Uterus (tissue), 4 donors: ENCODE measurements at regions of chr4 and their contacts with region 1.

Region 1: DNA sequence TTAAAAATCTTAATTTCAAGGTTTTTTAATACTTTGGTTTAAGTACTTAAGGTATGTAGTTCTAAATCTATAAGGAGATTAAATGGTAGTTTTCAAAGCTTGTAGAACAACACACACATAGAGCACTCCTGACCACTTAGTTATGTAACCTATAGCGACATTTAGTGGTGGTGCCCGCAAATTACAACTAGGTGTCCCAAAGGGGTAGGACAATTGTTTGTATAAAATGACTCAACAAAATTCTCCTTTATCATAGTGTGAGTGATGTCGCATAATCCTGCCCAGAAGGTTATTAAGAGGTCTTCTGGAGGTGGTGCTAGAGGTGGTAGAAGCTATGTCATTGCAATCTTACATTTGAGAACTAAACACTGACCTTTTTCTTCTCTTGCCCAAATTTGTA is 373.0 kb upstream of the RASGEF1B start:
- DNase-seq: peak; percentile 62 to 72
- H3K4me3 ChIP-seq: no peak overlapping the region
- H3K27ac ChIP-seq: no peak overlapping the region
- H3K4me1 ChIP-seq: peaks cover 0 to 5% of the 10 kb centered on the region in 2 donors
- H3K27me3 ChIP-seq: no peaks in the 10 kb centered on the region
- CTCF ChIP-seq: peak; percentile 65 to 85 (median 76)
- POLR2A ChIP-seq: no peak

Region 2: DNA sequence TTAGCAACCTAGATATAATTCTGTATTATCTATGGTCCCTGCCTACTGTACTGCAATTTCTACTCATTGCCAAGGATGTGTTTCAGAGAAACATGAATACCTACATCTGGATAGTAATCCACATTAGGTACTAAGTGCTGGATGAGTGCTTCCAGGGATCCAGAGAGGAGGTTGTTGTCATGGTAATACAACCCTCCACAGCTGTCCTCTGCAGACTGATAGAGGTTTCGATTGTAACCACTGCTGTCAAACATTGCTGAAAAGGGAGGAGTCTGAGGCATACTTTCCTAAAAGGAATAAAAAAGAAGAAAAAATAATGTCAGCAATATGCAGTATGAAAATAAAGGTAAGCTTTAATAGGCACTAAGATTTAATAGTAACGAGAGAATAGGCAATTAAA is 385.5 kb before region 1 on chr4:
- intact Hi-C with region 1: loop called (anchors 5 kb)
- DNase-seq: no peak
- H3K4me3 ChIP-seq: no peak overlapping the region
- H3K27ac ChIP-seq: no peak overlapping the region
- H3K4me1 ChIP-seq: no peaks in the 10 kb centered on the region
- H3K27me3 ChIP-seq: no peaks in the 10 kb centered on the region
- CTCF ChIP-seq: no peak
- POLR2A ChIP-seq: no peak